ENCODE measurements at regions of chr5 and their contacts with region 1.

Region 1: GRCh38 chr5:6632917-6633468 is at the starts of genes NSUN2 and SRD5A1:
- DNase-seq: peak; percentile 78 to 84
- ATAC-seq: peak; percentile 95 to 96
- H3K4me3 ChIP-seq: peak within 1 kb of the TSS; percentile 76 to 87 (median 85)
- H3K27ac ChIP-seq: peak within 1 kb of the TSS; percentile 84 to 95 (median 90)
- H3K4me1 ChIP-seq: peaks cover 20 to 26% of the 10 kb centered on the region in 2 donors
- H3K27me3 ChIP-seq: no peaks in the 10 kb centered on the region
- CTCF ChIP-seq: no peak
- POLR2A ChIP-seq: peak; percentile 69 to 74
- total RNA-seq, gene NSUN2: 29.4 to 45.9 (median 38.0) TPM
- total RNA-seq, gene SRD5A1: 0.75 to 4.3 (median 3.3) TPM

Region 2: DNA sequence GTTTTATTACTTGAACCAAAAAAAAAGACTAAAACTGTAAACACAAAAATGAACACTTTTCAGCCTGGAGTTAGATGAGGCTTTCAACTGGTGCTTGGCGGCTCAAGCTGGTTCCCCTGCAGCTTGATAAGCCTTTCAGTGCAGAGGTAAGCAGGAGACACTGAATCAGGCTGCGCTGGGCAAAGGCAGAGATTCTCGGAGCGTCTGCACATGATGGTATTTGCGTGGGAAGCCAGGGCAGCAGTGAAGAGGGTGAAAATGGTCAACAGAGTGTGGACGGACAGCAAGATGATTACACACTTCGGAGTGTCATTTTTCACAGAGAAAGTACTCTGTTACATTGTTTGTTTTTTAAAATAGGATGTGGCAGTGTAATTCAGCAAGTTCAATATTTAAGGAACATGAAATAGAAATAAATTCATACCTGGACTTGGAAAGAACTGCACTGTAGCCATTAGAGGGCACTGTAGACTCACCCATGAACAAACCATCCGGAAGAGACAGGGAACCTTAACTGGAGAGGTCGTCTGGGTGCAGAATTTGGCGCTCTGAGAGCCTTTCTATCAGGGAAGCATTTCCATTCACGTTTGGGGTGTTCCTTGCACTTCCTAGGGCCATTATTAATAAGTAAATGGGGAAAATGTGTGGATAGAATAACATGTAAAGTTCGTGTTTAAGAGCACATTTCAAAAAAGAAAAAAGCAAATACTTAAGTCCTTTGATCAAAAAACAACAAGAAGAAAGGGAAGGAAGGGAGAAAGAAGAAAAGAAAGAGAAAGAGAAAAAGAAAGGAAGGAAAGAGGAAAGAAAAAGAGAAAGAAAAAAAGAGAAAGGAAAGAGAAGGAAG is 1140.7 kb before region 1 on chr5:
- in situ Hi-C with region 1: no loop called
- intact Hi-C with region 1: loop called (anchors 10 kb)
- DNase-seq: no peak
- ATAC-seq: no peak
- H3K4me3 ChIP-seq: no peak overlapping the region
- H3K27ac ChIP-seq: no peak overlapping the region
- H3K4me1 ChIP-seq: peaks cover 15 to 16% of the 10 kb centered on the region in 2 donors
- H3K27me3 ChIP-seq: no peaks in the 10 kb centered on the region
- CTCF ChIP-seq: peak; percentile 46 to 73 (median 60)
- POLR2A ChIP-seq: no peak

Region 3: DNA sequence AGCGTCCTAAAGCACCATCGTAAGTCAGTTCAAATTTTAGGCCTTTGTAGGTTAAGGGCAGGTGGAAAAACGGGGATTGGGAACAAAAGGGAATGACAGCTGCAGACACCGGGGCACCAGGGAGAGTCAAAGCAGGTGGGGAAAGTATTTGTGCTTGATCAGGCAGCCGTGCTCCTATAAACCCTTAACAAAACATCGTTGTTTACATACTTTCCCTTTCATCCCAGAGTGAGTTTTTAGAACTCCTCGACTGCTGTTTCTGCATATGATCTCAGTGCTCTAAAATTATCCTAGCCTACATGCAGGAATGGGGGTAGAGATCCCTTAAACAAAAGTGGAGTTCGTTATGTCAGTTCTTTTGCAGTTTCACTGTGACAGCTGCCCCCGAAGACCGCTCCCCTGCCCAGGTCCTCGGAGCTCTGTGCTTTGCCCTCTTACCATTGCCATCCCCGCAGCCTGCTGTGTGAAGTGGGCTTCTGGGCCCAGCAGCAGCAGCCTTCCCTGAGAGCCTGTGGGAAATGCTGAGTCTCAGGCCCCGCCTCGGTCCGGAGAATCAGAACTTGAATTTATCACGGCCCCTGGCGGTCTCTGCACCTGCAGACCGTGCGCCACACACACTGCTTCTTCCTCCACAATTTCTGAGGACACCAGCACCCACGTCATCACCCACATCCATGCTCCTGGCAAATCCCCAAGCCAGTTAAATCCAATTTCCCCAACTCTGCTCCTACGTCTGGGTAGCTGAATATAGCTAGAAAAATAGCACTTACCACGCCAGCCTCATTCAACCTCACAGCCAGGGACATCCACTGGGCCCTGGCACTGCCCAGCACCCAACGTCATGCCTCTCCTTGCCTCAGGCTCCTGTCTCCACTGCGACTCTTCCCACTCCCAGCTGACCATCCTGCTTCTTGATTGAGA is 87.0 kb before region 1 on chr5:
- in situ Hi-C with region 1: no loop called
- intact Hi-C with region 1: no loop called
- DNase-seq: peak in 1 of 2 donors; percentile 47
- ATAC-seq: peak; percentile 63 to 64
- H3K4me3 ChIP-seq: peak overlapping the region in 2 of 4 donors; percentile 11 to 34
- H3K27ac ChIP-seq: peak overlapping the region; percentile 80 to 89 (median 85)
- H3K4me1 ChIP-seq: peaks cover 31 to 53% of the 10 kb centered on the region in 2 donors
- H3K27me3 ChIP-seq: no peaks in the 10 kb centered on the region
- CTCF ChIP-seq: no peak
- POLR2A ChIP-seq: no peak

Region 4: GRCh38 chr5:6704361-6704851 is 71.4 kb after region 1 on chr5:
- in situ Hi-C with region 1: no loop called
- intact Hi-C with region 1: loop called (anchors 2 kb)
- DNase-seq: peak; percentile 60 to 87
- ATAC-seq: peak; percentile 96 to 97
- H3K4me3 ChIP-seq: peak overlapping the region in 1 of 4 donors; percentile 4
- H3K27ac ChIP-seq: peak overlapping the region; percentile 84 to 91 (median 88)
- H3K4me1 ChIP-seq: peaks cover 18% of the 10 kb centered on the region in 2 donors
- H3K27me3 ChIP-seq: no peaks in the 10 kb centered on the region
- CTCF ChIP-seq: no peak
- POLR2A ChIP-seq: no peak

Region 5: GRCh38 chr5:6745706-6746222 is 112.8 kb after region 1 on chr5:
- in situ Hi-C with region 1: loop called in 2 of 4 experiments (anchors 5 to 10 kb)
- intact Hi-C with region 1: loop called (anchors 1 kb)
- DNase-seq: no peak
- ATAC-seq: peak; percentile 79 to 92
- H3K4me3 ChIP-seq: no peak overlapping the region
- H3K27ac ChIP-seq: peak overlapping the region in 3 of 4 donors; percentile 8 to 40 (median 19)
- H3K4me1 ChIP-seq: peaks cover 0 to 7% of the 10 kb centered on the region in 2 donors
- H3K27me3 ChIP-seq: no peaks in the 10 kb centered on the region
- CTCF ChIP-seq: peak; percentile 67 to 83 (median 80)
- POLR2A ChIP-seq: no peak

Region 6: DNA sequence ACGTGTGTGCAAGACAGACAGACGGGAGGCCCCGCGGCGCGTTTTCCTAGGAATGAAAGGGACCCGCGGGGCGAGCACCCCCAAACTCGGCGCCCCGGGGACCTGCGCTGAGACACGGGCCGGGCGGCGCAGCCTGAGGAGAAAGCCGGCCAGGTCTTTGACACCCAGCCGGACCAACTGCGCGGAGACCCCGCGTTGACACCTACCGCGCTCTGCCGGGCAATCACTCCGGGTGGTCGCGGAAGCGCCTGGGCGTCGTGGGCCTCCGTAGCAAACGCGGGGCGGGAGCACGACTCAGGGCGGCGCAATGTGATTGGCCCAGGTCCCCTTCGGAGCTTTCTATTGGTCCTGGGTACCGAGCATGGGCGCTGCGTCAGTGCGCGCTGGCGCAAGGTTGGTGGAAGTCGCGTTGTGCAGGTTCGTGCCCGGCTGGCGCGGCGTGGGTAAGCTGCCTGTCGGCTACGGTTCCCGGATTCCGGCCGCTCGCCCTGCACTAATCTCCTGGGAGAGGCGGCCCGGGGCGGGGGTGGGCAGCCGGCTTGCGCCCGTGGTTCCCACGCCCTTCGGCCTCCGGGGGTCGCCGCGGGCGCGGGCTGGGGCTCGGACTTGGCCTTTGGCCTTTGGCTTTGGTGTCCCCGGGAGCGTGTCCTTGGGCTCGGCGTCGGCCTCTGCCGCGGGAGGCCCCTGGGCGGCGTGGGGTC is 1235.9 kb after region 1 on chr5 and contains the starts of genes FASTKD3 and MTRR:
- in situ Hi-C with region 1: loop called in 2 of 4 experiments (anchors 25 kb)
- intact Hi-C with region 1: no loop called
- DNase-seq: peak; percentile 93
- ATAC-seq: peak; percentile 99 to 100
- H3K4me3 ChIP-seq: peak within 1 kb of the TSS; percentile 86 to 99 (median 96)
- H3K27ac ChIP-seq: peak within 1 kb of the TSS; percentile 89 to 95 (median 93)
- H3K4me1 ChIP-seq: peaks cover 28 to 37% of the 10 kb centered on the region in 2 donors
- H3K27me3 ChIP-seq: no peaks in the 10 kb centered on the region
- CTCF ChIP-seq: peak in 2 of 5 experiments; percentile 5 to 14
- POLR2A ChIP-seq: peak; percentile 83 to 89
- total RNA-seq, gene FASTKD3: 6.8 to 9.4 (median 7.3) TPM
- total RNA-seq, gene MTRR: 27.9 to 75.1 (median 50.8) TPM